ENCODE measurements at regions of chr19 and their contacts with region 1.

Region 1: DNA sequence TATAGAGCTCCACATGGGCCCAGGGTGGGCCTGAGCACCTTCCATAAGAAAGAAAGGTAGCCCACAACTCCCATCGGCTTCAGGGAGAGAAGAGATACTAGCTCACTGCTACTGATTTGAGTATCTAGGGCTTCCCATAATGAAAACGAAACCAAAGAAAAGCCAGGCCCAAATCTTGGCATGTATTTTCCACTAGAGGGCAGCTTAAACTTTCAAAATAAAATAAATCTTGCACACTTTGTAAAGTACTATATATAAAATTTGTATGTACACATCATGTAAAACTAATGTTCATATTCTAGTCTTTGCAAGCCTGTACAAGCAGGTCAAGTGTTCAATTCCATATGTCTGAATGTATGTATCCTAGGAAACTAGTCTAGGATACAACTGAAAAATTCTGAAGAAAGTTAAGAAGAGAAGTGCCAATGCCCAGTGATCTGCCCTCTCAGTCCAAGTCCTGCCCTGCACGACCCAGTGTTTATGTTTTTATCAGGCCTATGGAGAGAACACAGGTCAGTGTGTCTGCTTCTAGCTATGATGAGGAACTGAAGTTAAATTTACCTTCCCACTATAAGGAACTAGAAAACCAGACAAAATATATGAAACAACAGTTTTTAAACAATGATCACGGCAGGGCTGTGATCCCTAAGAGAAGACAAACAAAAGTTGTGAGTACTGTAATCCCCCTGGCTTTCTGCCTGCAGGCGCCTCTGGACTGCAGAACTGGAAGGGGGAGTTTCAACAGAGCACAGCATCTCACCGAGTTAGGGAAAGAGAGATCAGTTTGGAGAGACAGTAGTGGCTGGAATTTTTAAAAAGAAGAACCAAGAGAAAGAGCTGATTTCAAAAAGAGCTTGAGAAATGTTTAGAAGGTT is 475.7 kb downstream of the UQCRFS1 start:
- DNase-seq: no peak

Region 2: GRCh38 chr19:28878862-28879566 is 141.8 kb after region 1 on chr19:
- intact Hi-C with region 1: loop called (anchors 1 kb)
- DNase-seq: peak; percentile 33 to 96 (median 78)

Region 3: DNA sequence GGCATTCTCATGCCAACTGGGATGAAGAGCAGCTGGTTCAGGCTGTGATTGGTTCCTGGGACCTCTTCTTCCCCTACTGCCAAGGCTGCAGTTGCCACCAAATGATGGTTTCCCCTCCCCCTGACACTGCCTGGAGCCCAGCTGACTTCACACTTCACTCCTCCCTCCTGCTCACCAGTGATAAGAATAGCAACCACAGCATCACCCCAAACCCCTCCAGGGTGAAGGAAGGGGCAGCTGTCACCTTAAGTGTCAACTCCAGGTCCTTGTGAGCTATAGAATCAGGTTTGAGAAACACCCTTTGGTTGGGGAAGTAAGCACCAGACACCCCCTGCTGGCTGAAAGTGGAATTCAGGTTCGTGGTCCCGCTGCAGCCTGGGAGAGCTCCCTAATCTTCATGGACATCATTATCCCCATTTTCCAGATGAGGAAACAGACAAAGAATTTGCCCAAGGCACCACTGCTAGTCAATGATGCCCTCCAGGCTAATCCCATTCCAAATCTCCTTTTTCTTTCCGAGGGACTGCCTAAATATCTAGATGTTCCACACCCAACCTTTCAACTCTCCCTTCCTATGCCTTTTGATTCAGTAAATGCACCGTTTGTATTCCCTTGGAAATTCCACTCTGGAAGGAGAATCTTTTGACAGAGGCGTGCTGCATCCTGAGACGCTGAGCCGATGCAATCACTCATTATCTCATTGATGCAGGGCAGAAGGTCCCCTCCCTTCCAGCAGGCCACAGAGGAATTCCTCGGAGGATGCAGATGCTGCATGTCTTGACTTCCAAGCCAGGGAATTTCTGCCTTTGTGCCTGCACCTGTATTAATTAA is 526.3 kb after region 1 on chr19:
- intact Hi-C with region 1: loop called (anchors 10 kb)
- DNase-seq: peak in 6 of 10 donors; percentile 33 to 80 (median 63)

Measured in posterior cingulate gyrus (tissue), 11 donors.